ENCODE measurements at regions of chr15 and their contacts with region 1.

Region 1: GRCh38 chr15:51401872-51402517 is 60.5 kb downstream of the GLDN start:
- DNase-seq: no peak
- H3K4me3 ChIP-seq: no peak overlapping the region
- H3K27ac ChIP-seq: no peak overlapping the region
- H3K4me1 ChIP-seq: no peaks in the 10 kb centered on the region
- H3K27me3 ChIP-seq: no peaks in the 10 kb centered on the region
- CTCF ChIP-seq: peak; percentile 43 to 60

Region 2: GRCh38 chr15:51281368-51281967 is 120.5 kb before region 1 on chr15:
- CTCF ChIA-PET with region 1: no interaction called
- dilution Hi-C with region 1: no loop called
- in situ Hi-C with region 1: no loop called
- intact Hi-C with region 1: loop called (anchors 1 kb)
- DNase-seq: peak; percentile 24
- H3K4me3 ChIP-seq: no peak overlapping the region
- H3K27ac ChIP-seq: no peak overlapping the region
- H3K4me1 ChIP-seq: no peaks in the 10 kb centered on the region
- H3K27me3 ChIP-seq: peaks cover 2% of the 10 kb centered on the region
- CTCF ChIP-seq: peak; percentile 47 to 72

Region 3: DNA sequence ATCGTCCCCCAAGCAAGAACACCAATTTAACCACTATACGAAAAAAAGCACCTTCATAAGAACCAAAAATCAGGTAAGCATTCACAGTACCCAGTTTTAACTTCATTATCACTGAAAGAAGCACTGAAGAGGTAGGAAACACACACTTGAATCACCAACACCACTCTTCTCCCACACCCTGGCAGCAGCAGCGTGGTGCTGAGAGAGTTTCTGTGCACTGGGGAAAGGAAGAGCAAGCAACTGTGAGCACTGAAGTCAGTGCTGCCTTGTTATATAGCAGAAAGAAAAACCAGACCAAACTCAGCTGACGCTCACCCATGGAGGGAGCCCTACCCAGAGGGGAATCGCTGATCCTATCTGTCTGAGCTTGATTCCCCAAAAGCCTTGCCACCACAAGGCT is 122.4 kb after region 1 on chr15:
- CTCF ChIA-PET with region 1: no interaction called
- dilution Hi-C with region 1: no loop called
- in situ Hi-C with region 1: no loop called
- intact Hi-C with region 1: no loop called
- DNase-seq: no peak
- H3K4me3 ChIP-seq: no peak overlapping the region
- H3K27ac ChIP-seq: no peak overlapping the region
- H3K4me1 ChIP-seq: no peaks in the 10 kb centered on the region
- H3K27me3 ChIP-seq: no peaks in the 10 kb centered on the region
- CTCF ChIP-seq: no peak